ENCODE measurements at regions of chr3 and their contacts with region 1.

Region 1: DNA sequence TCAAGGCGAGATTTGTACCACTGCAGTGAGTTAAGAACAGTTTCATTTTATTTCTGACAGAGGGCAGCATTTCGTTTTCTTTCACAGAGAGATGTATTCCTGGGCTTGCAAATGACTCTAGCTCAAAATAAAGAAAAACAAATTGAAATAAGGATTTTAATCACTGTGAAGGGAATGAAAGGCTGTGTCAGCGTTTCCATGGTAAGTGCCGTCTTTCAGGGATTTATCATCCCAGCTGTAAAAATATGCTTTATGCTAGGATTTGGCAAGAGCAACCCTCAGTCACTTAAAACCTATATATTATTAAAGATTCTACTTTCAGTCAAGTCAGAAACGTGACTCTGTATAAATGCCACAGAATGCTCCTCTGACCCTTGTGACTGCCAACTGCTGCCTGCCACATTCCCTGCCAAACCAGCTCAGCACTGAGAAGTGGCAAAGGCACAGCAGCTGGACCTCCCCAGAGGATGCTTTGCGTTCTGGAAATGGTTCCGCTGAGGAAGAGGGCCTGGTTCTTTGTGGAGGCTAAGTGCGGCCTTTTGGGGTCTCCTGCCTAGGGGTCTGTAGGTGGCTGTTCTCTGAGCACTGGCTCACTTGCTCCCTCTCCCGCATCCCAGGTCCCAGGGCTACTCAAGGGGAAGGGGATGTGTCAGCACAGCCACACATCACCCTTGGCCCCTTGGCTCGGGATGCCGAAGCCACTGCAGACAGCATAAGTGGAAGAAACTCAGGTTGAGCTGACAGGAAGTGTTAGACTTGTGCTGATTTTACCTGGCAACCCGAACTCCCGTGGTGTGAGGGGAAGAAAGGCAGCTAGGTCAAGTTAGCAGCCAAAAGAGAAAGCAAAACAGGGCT is 56.6 kb upstream of the POMGNT2 start:
- DNase-seq: peak; percentile 26 to 84 (median 62)
- ATAC-seq: peak; percentile 94
- H3K4me3 ChIP-seq: peak overlapping the region; percentile 18 to 30
- H3K4me3 Mint-ChIP-seq: peak overlapping the region; percentile 82
- H3K27ac ChIP-seq: peak overlapping the region; percentile 64 to 79
- H3K27ac Mint-ChIP-seq: peak overlapping the region; percentile 100
- H3K4me1 ChIP-seq: peaks cover 26% of the 10 kb centered on the region
- H3K4me1 Mint-ChIP-seq: peaks cover 28% of the 10 kb centered on the region
- H3K27me3 ChIP-seq: no peaks in the 10 kb centered on the region
- H3K27me3 Mint-ChIP-seq: no peaks in the 10 kb centered on the region
- CTCF ChIP-seq: peak; percentile 67

Region 2: GRCh38 chr3:43180027-43180426 is 17.6 kb after region 1 on chr3:
- CTCF ChIA-PET with region 1: interaction called, 34 read pairs
- POLR2A ChIA-PET with region 1: interaction called, 10 read pairs
- intact Hi-C with region 1: loop called in 1 of 2 experiments (anchors 2 kb)
- DNase-seq: peak in 8 of 9 experiments; percentile 27 to 78 (median 54)
- ATAC-seq: peak; percentile 91
- H3K4me3 ChIP-seq: peak overlapping the region; percentile 10 to 32
- H3K4me3 Mint-ChIP-seq: peak overlapping the region; percentile 77
- H3K27ac ChIP-seq: peak overlapping the region; percentile 49 to 90
- H3K27ac Mint-ChIP-seq: peak overlapping the region; percentile 97
- H3K4me1 ChIP-seq: peaks cover 40% of the 10 kb centered on the region
- H3K4me1 Mint-ChIP-seq: peaks cover 62% of the 10 kb centered on the region
- H3K27me3 ChIP-seq: no peaks in the 10 kb centered on the region
- H3K27me3 Mint-ChIP-seq: no peaks in the 10 kb centered on the region
- CTCF ChIP-seq: no peak

Region 3: DNA sequence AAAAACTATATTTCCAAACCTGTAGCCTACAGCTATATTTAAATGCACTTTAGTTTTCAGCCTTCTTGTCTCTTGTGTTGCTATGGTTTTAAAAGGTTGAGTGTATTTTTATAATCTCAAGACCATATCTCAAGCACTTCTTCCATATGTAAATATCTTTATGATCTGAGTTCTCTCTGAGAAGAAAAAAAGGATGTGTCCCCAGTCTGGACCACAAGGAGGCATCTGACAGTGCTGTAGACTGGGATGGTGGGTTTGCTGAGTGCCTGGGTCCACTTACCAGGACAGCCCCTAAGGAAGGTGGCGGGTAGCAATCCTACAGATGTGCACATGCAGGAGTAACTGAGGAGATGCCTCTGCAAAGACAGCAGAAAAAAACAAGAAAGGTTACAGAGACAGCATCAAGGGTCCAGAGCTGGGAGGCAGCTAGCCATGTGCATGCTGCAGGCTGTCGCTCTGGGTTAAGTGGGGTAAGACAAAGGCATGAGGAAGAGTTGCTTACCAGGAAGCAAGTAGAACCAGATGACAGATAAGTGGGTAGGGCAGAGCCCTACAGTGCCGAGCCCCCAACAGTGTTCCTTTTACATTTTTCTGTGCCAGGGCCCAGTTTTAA is 53.3 kb after region 1 on chr3:
- CTCF ChIA-PET with region 1: interaction called, 51 read pairs
- POLR2A ChIA-PET with region 1: interaction called, 24 read pairs
- intact Hi-C with region 1: no loop called
- DNase-seq: peak in 2 of 9 experiments; percentile 30 to 49
- ATAC-seq: peak; percentile 39
- H3K4me3 ChIP-seq: no peak overlapping the region
- H3K4me3 Mint-ChIP-seq: no peak overlapping the region
- H3K27ac ChIP-seq: peak overlapping the region in 1 of 2 experiments; percentile 3
- H3K27ac Mint-ChIP-seq: peak overlapping the region; percentile 82
- H3K4me1 ChIP-seq: peaks cover 47% of the 10 kb centered on the region
- H3K4me1 Mint-ChIP-seq: peaks cover 53% of the 10 kb centered on the region
- H3K27me3 ChIP-seq: no peaks in the 10 kb centered on the region
- H3K27me3 Mint-ChIP-seq: no peaks in the 10 kb centered on the region
- CTCF ChIP-seq: peak; percentile 23

Region 4: DNA sequence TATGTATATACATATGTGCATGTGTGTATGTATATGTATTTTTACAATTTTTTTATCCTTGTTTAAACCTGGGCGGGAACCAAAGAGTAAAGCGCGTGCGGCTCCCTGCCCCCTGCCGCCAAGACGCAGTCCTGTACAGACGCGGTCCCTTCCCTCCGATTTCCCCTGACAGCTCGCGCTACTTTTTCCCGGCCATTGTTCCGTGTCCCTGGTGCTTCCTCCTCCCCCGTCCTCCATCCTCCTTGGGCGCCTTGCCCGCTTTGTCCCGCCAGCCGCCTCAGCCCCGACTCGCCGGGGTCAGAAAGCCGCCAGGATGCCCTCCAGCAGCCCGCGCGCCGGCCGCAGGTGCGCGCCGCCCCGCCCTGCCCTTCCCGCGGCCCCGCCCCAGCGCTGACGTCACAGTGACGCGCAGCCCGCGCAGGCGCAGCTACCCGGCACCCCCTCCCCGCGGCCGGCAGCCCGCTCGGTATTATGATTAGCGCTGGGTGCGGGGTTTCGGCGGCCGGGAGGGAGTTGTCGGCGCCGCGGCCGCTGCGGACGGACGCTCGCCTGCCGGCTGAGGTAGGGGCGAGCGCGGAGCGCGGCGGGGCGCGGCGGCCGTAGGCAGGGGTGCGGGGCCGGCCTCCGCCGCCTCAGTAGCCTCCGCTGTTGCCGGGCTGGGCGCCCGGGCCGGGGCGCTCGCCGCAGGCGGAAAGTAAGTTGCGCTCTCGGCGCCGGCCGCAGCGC is 123.8 kb after region 1 on chr3 and contains the start of gene SNRK:
- CTCF ChIA-PET with region 1: interaction called, 27 read pairs
- POLR2A ChIA-PET with region 1: interaction called, 7 read pairs
- intact Hi-C with region 1: loop called (anchors 1 kb)
- DNase-seq: peak; percentile 86 to 99 (median 93)
- ATAC-seq: peak; percentile 84
- H3K4me3 ChIP-seq: peak within 1 kb of the TSS; percentile 76 to 82
- H3K4me3 Mint-ChIP-seq: peak within 1 kb of the TSS; percentile 99
- H3K27ac ChIP-seq: peak within 1 kb of the TSS; percentile 87 to 91
- H3K27ac Mint-ChIP-seq: peak within 1 kb of the TSS; percentile 100
- H3K4me1 ChIP-seq: peaks cover 27% of the 10 kb centered on the region
- H3K4me1 Mint-ChIP-seq: peaks cover 31% of the 10 kb centered on the region
- H3K27me3 ChIP-seq: no peaks in the 10 kb centered on the region
- H3K27me3 Mint-ChIP-seq: no peaks in the 10 kb centered on the region
- CTCF ChIP-seq: peak; percentile 48
- total RNA-seq, gene SNRK: 280 to 281 TPM

Region 5: DNA sequence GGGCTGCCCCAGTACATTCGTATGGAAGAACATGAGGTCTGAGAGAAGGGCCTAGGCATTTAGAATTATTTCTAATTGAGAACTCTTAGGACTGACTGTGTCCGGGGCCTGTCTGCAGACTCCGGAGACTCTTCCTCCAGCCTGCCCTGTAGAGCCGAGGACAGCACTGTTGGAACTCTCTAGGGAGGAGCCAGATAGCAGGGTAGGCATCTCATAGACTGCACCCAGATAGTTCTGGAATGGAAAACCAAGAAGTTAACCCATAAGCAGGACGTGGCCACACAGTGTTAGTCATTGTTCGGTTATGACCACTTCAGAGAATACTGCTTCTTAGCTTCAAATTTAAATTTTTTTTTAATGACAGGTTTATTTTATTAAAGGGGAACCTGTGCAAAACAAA is 183.4 kb after region 1 on chr3:
- CTCF ChIA-PET with region 1: interaction called, 23 read pairs
- POLR2A ChIA-PET with region 1: interaction called, 10 read pairs
- intact Hi-C with region 1: loop called in 1 of 2 experiments (anchors 1 kb)
- DNase-seq: peak in 2 of 9 experiments; percentile 32 to 48
- ATAC-seq: peak; percentile 16
- H3K4me3 ChIP-seq: no peak overlapping the region
- H3K4me3 Mint-ChIP-seq: peak overlapping the region; percentile 36
- H3K27ac ChIP-seq: peak overlapping the region; percentile 81 to 91
- H3K27ac Mint-ChIP-seq: peak overlapping the region; percentile 97
- H3K4me1 ChIP-seq: peaks cover 82% of the 10 kb centered on the region
- H3K4me1 Mint-ChIP-seq: peaks cover 84% of the 10 kb centered on the region
- H3K27me3 ChIP-seq: no peaks in the 10 kb centered on the region
- H3K27me3 Mint-ChIP-seq: no peaks in the 10 kb centered on the region
- CTCF ChIP-seq: no peak

Region 6: GRCh38 chr3:43389388-43390254 is 227.2 kb after region 1 on chr3:
- CTCF ChIA-PET with region 1: interaction called, 15 read pairs
- POLR2A ChIA-PET with region 1: interaction called, 4 read pairs
- intact Hi-C with region 1: no loop called
- DNase-seq: peak; percentile 40 to 93 (median 74)
- ATAC-seq: peak; percentile 89
- H3K4me3 ChIP-seq: peak overlapping the region in 1 of 2 experiments; percentile 21
- H3K4me3 Mint-ChIP-seq: peak overlapping the region; percentile 50
- H3K27ac ChIP-seq: peak overlapping the region; percentile 45 to 85
- H3K27ac Mint-ChIP-seq: peak overlapping the region; percentile 92
- H3K4me1 ChIP-seq: peaks cover 32% of the 10 kb centered on the region
- H3K4me1 Mint-ChIP-seq: peaks cover 80% of the 10 kb centered on the region
- H3K27me3 ChIP-seq: no peaks in the 10 kb centered on the region
- H3K27me3 Mint-ChIP-seq: no peaks in the 10 kb centered on the region
- CTCF ChIP-seq: no peak

Region 7: GRCh38 chr3:44198284-44199269 is 1036.1 kb after region 1 on chr3:
- CTCF ChIA-PET with region 1: no interaction called
- POLR2A ChIA-PET with region 1: no interaction called
- intact Hi-C with region 1: loop called (anchors 2 kb)
- DNase-seq: peak; percentile 26 to 78 (median 65)
- ATAC-seq: peak; percentile 78
- H3K4me3 ChIP-seq: no peak overlapping the region
- H3K4me3 Mint-ChIP-seq: no peak overlapping the region
- H3K27ac ChIP-seq: no peak overlapping the region
- H3K27ac Mint-ChIP-seq: no peak overlapping the region
- H3K4me1 ChIP-seq: no peaks in the 10 kb centered on the region
- H3K4me1 Mint-ChIP-seq: peaks cover 4% of the 10 kb centered on the region
- H3K27me3 ChIP-seq: peaks cover 0 to 3% of the 10 kb centered on the region in 2 experiments
- H3K27me3 Mint-ChIP-seq: peaks cover 24% of the 10 kb centered on the region
- CTCF ChIP-seq: peak; percentile 76

Measured in CD8-positive, alpha-beta T cell (primary cell).